ENCODE measurements at regions of chr3 and their contacts with region 1.

Region 1: GRCh38 chr3:100708967-100709841 is at the start of gene TFG:
- DNase-seq: peak; percentile 98
- H3K4me3 Mint-ChIP-seq: peak within 1 kb of the TSS; percentile 83
- H3K27ac Mint-ChIP-seq: peak within 1 kb of the TSS; percentile 97
- H3K4me1 Mint-ChIP-seq: peaks cover 39% of the 10 kb centered on the region
- H3K27me3 Mint-ChIP-seq: peaks cover 6% of the 10 kb centered on the region
- total RNA-seq, gene TFG: 45.6 to 46.0 TPM

Region 2: GRCh38 chr3:100260685-100261484 is 448.3 kb before region 1 on chr3 and contains the start of gene TBC1D23:
- CTCF ChIA-PET with region 1: no interaction called
- intact Hi-C with region 1: loop called (anchors 1 kb)
- DNase-seq: peak; percentile 98
- H3K4me3 Mint-ChIP-seq: peak within 1 kb of the TSS; percentile 86
- H3K27ac Mint-ChIP-seq: peak within 1 kb of the TSS; percentile 89
- H3K4me1 Mint-ChIP-seq: peaks cover 59% of the 10 kb centered on the region
- H3K27me3 Mint-ChIP-seq: no peaks in the 10 kb centered on the region
- total RNA-seq, gene TBC1D23: 14.1 to 15.8 TPM

Region 3: GRCh38 chr3:100603469-100603868 is 105.7 kb before region 1 on chr3:
- CTCF ChIA-PET with region 1: no interaction called
- intact Hi-C with region 1: loop called (anchors 1 kb)
- DNase-seq: no peak
- H3K4me3 Mint-ChIP-seq: peak overlapping the region; percentile 37
- H3K27ac Mint-ChIP-seq: no peak overlapping the region
- H3K4me1 Mint-ChIP-seq: peaks cover 25% of the 10 kb centered on the region
- H3K27me3 Mint-ChIP-seq: peaks cover 2% of the 10 kb centered on the region

Region 4: DNA sequence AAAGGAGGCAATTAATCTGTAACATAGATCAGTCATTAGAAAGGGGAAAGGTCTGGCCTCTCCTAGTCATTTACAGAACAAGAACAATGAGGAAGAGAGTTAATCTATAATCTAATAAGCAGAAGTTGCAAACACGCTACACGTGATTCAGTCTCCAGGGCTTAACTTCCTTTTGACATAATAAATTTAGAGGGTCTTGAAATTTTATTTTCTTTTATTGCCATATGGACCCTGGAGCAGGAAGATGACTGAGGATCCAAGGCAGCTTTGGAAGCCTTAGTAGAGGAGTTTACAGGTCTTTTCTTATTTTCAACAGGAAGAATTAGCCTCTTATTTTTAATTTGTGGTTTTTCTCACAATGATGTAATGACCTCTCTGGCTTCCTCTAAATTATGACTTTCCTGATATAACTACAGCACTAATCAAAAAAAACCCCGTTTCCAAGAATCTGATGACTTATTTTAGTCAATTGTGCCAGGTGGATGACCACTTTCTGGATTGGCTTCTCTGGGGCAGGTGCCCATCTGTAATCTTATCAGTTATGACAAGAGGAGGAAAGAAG is 67.7 kb before region 1 on chr3:
- CTCF ChIA-PET with region 1: no interaction called
- intact Hi-C with region 1: no loop called
- DNase-seq: no peak
- H3K4me3 Mint-ChIP-seq: no peak overlapping the region
- H3K27ac Mint-ChIP-seq: no peak overlapping the region
- H3K4me1 Mint-ChIP-seq: no peaks in the 10 kb centered on the region
- H3K27me3 Mint-ChIP-seq: peaks cover 7% of the 10 kb centered on the region

Region 5: GRCh38 chr3:100665230-100665629 is 44.0 kb before region 1 on chr3:
- CTCF ChIA-PET with region 1: interaction called, 4 read pairs
- intact Hi-C with region 1: loop called (anchors 1 kb)
- DNase-seq: peak; percentile 63
- H3K4me3 Mint-ChIP-seq: peak overlapping the region; percentile 34
- H3K27ac Mint-ChIP-seq: peak overlapping the region; percentile 47
- H3K4me1 Mint-ChIP-seq: peaks cover 22% of the 10 kb centered on the region
- H3K27me3 Mint-ChIP-seq: no peaks in the 10 kb centered on the region

Region 6: GRCh38 chr3:101676765-101677435 is 967.7 kb after region 1 on chr3 and contains the start of gene ZBTB11:
- CTCF ChIA-PET with region 1: no interaction called
- intact Hi-C with region 1: loop called (anchors 1 kb)
- DNase-seq: peak; percentile 100
- H3K4me3 Mint-ChIP-seq: peak within 1 kb of the TSS; percentile 87
- H3K27ac Mint-ChIP-seq: peak within 1 kb of the TSS; percentile 95
- H3K4me1 Mint-ChIP-seq: peaks cover 54% of the 10 kb centered on the region
- H3K27me3 Mint-ChIP-seq: no peaks in the 10 kb centered on the region
- total RNA-seq, gene ZBTB11: 31.2 to 31.7 TPM